PC-9 (cell line): ENCODE measurements at regions of chr3 and their contacts with region 1.

Region 1: GRCh38 chr3:24548278-24548677 is 53.6 kb upstream of the THRB start:
- DNase-seq: no peak
- H3K4me3 ChIP-seq: no peak overlapping the region
- H3K27ac ChIP-seq: no peak overlapping the region
- H3K4me1 ChIP-seq: peaks cover 8% of the 10 kb centered on the region; the same call in 1 of the 2 replicates
- H3K27me3 ChIP-seq: no peaks in the 10 kb centered on the region
- CTCF ChIP-seq: no peak

Region 2: DNA sequence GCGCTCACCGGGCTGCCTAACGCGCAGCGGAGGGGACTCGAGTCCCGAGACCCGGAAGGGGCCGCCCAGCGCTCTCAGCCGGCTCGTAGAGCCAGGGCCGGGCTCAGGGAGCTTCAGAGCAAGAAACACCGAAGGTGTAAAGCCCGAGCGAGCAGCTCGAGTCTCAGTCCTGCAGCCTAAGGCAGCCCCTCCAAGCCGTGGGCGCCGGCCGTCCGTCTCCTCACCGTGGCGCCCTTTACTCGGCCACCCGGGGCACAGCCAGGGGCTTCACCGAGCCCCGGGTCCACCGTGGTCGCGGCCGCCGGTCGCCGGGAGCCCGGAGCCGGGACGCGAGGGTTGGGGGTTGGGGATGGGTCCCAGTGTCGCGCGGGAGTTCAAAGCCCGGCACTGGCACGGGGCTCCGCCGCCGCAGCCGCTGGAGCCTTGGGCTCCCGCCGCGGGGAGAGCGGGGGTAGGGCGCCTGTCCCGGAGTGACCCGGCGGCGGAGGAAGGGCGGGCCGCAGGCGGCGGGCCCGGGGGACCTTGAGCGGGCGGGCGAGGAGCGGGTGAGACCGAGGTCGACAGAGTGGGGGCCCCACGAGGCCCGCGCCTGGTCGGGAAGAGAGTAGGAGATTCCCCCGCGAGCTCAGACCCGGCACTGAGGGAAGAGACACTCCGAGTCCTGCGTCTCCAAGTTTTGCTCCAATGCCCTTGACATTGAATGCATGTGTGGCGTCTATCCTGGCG is 26.7 kb before region 1 on chr3:
- CTCF ChIA-PET with region 1: no interaction called
- POLR2A ChIA-PET with region 1: interaction called, 12 read pairs
- intact Hi-C with region 1: no loop called
- DNase-seq: peak in 1 of 2 experiments; percentile 51
- H3K4me3 ChIP-seq: peak overlapping the region; percentile 87
- H3K27ac ChIP-seq: peak overlapping the region; percentile 56
- H3K4me1 ChIP-seq: peaks cover 37% of the 10 kb centered on the region
- H3K27me3 ChIP-seq: no peaks in the 10 kb centered on the region
- CTCF ChIP-seq: no peak; the same call in 1 of the 2 replicates

Region 3: GRCh38 chr3:24640330-24640877 is 92.1 kb after region 1 on chr3:
- CTCF ChIA-PET with region 1: no interaction called
- POLR2A ChIA-PET with region 1: no interaction called
- intact Hi-C with region 1: no loop called
- DNase-seq: peak in 1 of 2 experiments; percentile 6
- H3K4me3 ChIP-seq: no peak overlapping the region
- H3K27ac ChIP-seq: no peak overlapping the region
- H3K4me1 ChIP-seq: no peaks in the 10 kb centered on the region
- H3K27me3 ChIP-seq: no peaks in the 10 kb centered on the region
- CTCF ChIP-seq: peak; percentile 65